ENCODE measurements at regions of chr9 and their contacts with region 1.

Region 1: GRCh38 chr9:33125871-33126822 is 41.0 kb downstream of the B4GALT1 start:
- DNase-seq: no peak
- ATAC-seq: peak in 1 of 4 donors; percentile 41
- H3K4me3 ChIP-seq: no peak overlapping the region
- H3K27ac ChIP-seq: no peak overlapping the region
- H3K4me1 ChIP-seq: peaks cover 26% of the 10 kb centered on the region
- H3K27me3 ChIP-seq: no peaks in the 10 kb centered on the region
- CTCF ChIP-seq: no peak

Region 2: GRCh38 chr9:32635362-32635761 is 490.8 kb before region 1 on chr9 and contains the start of gene TAF1L:
- intact Hi-C with region 1: no loop called
- DNase-seq: no peak
- ATAC-seq: no peak
- H3K4me3 ChIP-seq: no peak within 1 kb of the TSS
- H3K27ac ChIP-seq: no peak within 1 kb of the TSS
- H3K4me1 ChIP-seq: no peaks in the 10 kb centered on the region
- H3K27me3 ChIP-seq: no peaks in the 10 kb centered on the region
- CTCF ChIP-seq: no peak
- total RNA-seq, gene TAF1L: not detected

Region 3: DNA sequence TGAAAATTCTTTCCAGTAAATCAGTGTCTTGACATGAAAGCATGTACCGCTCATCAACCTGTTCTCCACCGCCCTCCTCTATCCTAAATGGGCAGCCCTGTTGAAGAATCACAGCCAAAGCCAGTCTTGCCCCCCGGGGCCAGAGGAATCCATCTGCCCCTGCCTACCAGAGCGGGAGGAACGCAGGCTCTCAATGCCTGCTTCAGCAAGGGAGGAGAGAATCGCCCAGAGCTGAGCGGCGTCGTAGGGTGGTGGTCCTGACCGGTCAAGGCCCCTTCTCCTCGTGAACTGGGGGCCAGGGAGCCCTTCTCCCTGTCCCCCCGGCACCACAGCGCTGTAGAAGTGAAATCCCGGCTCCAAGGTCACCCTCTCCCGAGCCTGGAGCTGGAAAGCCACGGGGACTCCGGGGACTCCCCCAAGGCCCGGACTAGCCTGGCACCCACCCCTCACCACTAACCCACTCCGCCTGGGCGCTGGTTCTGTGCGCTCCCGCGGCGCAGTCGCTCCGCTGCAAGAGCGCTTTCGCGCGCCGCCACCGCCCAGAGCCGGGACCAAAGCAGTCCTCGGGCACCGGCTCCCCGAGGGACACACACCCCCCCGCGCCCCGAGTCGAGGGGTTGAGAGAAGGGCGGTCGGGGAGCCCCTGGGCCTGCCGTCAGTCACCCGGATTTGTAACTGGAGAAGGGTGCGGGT is 343.5 kb before region 1 on chr9:
- intact Hi-C with region 1: no loop called
- DNase-seq: peak in 1 of 2 donors; percentile 42
- ATAC-seq: peak in 1 of 4 donors; percentile 30
- H3K4me3 ChIP-seq: peak overlapping the region; percentile 54
- H3K27ac ChIP-seq: no peak overlapping the region
- H3K4me1 ChIP-seq: no peaks in the 10 kb centered on the region
- H3K27me3 ChIP-seq: peaks cover 0 to 56% (median 17%) of the 10 kb centered on the region in 3 donors
- CTCF ChIP-seq: no peak

Region 4: GRCh38 chr9:33111631-33112030 is 14.5 kb before region 1 on chr9:
- intact Hi-C with region 1: loop called in 1 of 2 experiments (anchors 2 kb)
- DNase-seq: no peak
- ATAC-seq: no peak
- H3K4me3 ChIP-seq: no peak overlapping the region
- H3K27ac ChIP-seq: no peak overlapping the region
- H3K4me1 ChIP-seq: peaks cover 12% of the 10 kb centered on the region
- H3K27me3 ChIP-seq: no peaks in the 10 kb centered on the region
- CTCF ChIP-seq: no peak

Region 5: DNA sequence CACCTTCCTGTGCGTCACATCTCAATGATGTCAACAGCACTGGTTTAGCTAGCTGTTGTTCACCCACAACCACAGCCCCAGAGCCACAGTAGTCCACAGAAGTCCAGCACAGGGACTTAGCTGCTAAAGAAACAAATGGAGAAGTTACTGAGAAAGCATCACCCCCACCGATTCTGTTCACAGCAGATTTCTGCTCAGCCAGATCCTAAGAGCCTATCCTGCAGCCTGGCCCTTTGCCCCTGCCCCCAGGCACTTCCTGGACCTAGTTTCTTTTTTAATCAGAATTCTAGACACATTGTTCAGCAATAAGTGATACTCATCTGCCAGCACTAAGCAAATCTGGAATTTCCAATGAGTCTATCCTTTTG is 33.6 kb after region 1 on chr9:
- intact Hi-C with region 1: loop called in 1 of 2 experiments (anchors 5 kb)
- DNase-seq: peak; percentile 55 to 72
- ATAC-seq: no peak
- H3K4me3 ChIP-seq: peak overlapping the region; percentile 26
- H3K27ac ChIP-seq: peak overlapping the region; percentile 95
- H3K4me1 ChIP-seq: peaks cover 98% of the 10 kb centered on the region
- H3K27me3 ChIP-seq: no peaks in the 10 kb centered on the region
- CTCF ChIP-seq: no peak